ENCODE measurements at regions of chr13 and their contacts with region 1.

Region 1: GRCh38 chr13:48400850-48401291 is 12.0 kb downstream of the LPAR6 start:
- DNase-seq: peak; percentile 96
- H3K4me3 ChIP-seq: peak overlapping the region in 1 of 3 experiments; percentile 26
- H3K27ac ChIP-seq: peak overlapping the region; percentile 75
- H3K4me1 ChIP-seq: peaks cover 44% of the 10 kb centered on the region
- H3K27me3 ChIP-seq: no peaks in the 10 kb centered on the region
- CTCF ChIP-seq: no peak
- POLR2A ChIP-seq: no peak

Region 2: GRCh38 chr13:48532506-48533499 is 131.9 kb after region 1 on chr13 and contains the start of gene RCBTB2:
- CTCF ChIA-PET with region 1: interaction called, 11 read pairs
- POLR2A ChIA-PET with region 1: interaction called, 3 read pairs
- dilution Hi-C with region 1: no loop called
- intact Hi-C with region 1: loop called (anchors 1 kb)
- DNase-seq: peak; percentile 99
- H3K4me3 ChIP-seq: peak within 1 kb of the TSS; percentile 74 to 90 (median 78)
- H3K27ac ChIP-seq: peak within 1 kb of the TSS; percentile 73
- H3K4me1 ChIP-seq: peaks cover 10% of the 10 kb centered on the region
- H3K27me3 ChIP-seq: no peaks in the 10 kb centered on the region
- CTCF ChIP-seq: no peak
- POLR2A ChIP-seq: peak; percentile 95
- total RNA-seq, gene RCBTB2: 9.9 and 12.6 TPM in 2 replicates

Region 3: DNA sequence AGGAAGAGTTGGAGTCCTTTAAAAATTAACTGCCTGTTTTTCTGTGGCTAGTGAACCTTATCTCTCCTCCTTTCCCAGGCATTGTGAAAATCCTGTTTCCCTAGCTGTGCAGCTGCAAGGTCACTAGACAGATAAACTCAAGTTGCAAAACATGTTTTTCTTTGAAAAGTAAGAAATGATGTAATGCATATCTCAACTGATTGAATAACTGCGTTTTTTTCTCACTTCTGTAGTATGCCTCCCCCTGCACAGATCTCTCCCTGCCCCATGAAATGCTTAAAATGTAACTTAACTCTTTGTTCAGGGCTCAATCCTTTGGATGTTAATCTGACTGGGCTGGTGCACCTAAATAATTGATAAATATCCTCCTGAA is 225.2 kb after region 1 on chr13:
- CTCF ChIA-PET with region 1: no interaction called
- POLR2A ChIA-PET with region 1: no interaction called
- dilution Hi-C with region 1: no loop called
- intact Hi-C with region 1: no loop called
- DNase-seq: peak; percentile 94
- H3K4me3 ChIP-seq: no peak overlapping the region
- H3K27ac ChIP-seq: peak overlapping the region; percentile 63
- H3K4me1 ChIP-seq: peaks cover 10% of the 10 kb centered on the region
- H3K27me3 ChIP-seq: peaks cover 0 to 19% of the 10 kb centered on the region in 2 experiments
- CTCF ChIP-seq: no peak
- POLR2A ChIP-seq: no peak

Region 4: GRCh38 chr13:48879432-48879831 is 478.6 kb after region 1 on chr13:
- CTCF ChIA-PET with region 1: no interaction called
- POLR2A ChIA-PET with region 1: no interaction called
- dilution Hi-C with region 1: no loop called
- intact Hi-C with region 1: no loop called
- DNase-seq: no peak
- H3K4me3 ChIP-seq: no peak overlapping the region
- H3K27ac ChIP-seq: no peak overlapping the region
- H3K4me1 ChIP-seq: peaks cover 3% of the 10 kb centered on the region
- H3K27me3 ChIP-seq: peaks cover 9 to 10% of the 10 kb centered on the region in 2 experiments
- CTCF ChIP-seq: no peak
- POLR2A ChIP-seq: no peak